H1 (cell line): ENCODE measurements at regions of chr5 and their contacts with region 1.

Region 1: GRCh38 chr5:154834053-154834452 is 16.4 kb downstream of the FAXDC2 start:
- DNase-seq: no peak
- H3K4me3 ChIP-seq: no peak overlapping the region
- H3K27ac ChIP-seq: no peak overlapping the region
- H3K4me1 ChIP-seq: peaks cover 0 to 3% (median 0%) of the 10 kb centered on the region in 4 experiments; a peak in 2 of 7 replicates
- H3K27me3 ChIP-seq: no peaks in the 10 kb centered on the region
- CTCF ChIP-seq: no peak
- EP300 ChIP-seq: no peak
- POLR2A ChIP-seq: no peak
- RAD21 ChIP-seq: no peak

Region 2: GRCh38 chr5:154818471-154819116 is 15.5 kb before region 1 on chr5:
- CTCF ChIA-PET with region 1: interaction called, 5 read pairs
- POLR2A ChIA-PET with region 1: interaction called, 10 read pairs
- DNase-seq: no peak
- H3K4me3 ChIP-seq: no peak overlapping the region
- H3K27ac ChIP-seq: no peak overlapping the region
- H3K4me1 ChIP-seq: peaks cover 0 to 2% (median 0%) of the 10 kb centered on the region in 4 experiments; a peak in 1 of 7 replicates
- H3K27me3 ChIP-seq: no peaks in the 10 kb centered on the region
- CTCF ChIP-seq: no peak
- EP300 ChIP-seq: no peak
- POLR2A ChIP-seq: peak in 1 of 2 experiments; percentile 30; a peak in 1 of 3 replicates
- RAD21 ChIP-seq: no peak

Region 3: DNA sequence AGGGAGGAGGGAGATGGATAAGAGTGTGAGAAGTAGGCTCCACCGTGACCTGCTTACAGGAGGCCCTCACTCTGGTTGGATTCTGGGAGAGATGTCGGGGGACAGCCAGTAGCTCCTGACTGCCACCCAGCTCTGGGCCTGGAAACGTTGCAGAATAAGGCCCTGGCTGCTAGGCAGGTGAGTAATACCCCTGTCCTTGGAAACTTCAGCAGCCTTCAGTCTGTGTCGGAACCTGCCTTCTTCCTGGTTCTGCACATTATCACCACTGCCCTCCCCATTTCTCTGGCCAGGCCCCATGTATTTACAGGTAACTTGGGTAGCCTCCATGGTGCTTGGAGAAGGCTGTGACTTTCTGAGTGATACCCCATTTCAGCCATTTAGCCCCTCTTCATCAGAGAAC is 10.4 kb before region 1 on chr5:
- CTCF ChIA-PET with region 1: interaction called, 6 read pairs
- POLR2A ChIA-PET with region 1: interaction called, 10 read pairs
- DNase-seq: no peak
- H3K4me3 ChIP-seq: no peak overlapping the region
- H3K27ac ChIP-seq: no peak overlapping the region
- H3K4me1 ChIP-seq: peaks cover 0 to 2% (median 0%) of the 10 kb centered on the region in 4 experiments; a peak in 1 of 7 replicates
- H3K27me3 ChIP-seq: no peaks in the 10 kb centered on the region
- CTCF ChIP-seq: no peak
- EP300 ChIP-seq: no peak
- POLR2A ChIP-seq: peak in 1 of 2 experiments; percentile 38; a peak in 1 of 3 replicates
- RAD21 ChIP-seq: no peak